ENCODE measurements at regions of chr1 and their contacts with region 1.

Region 1: GRCh38 chr1:27192039-27192529 is 37.2 kb upstream of the SLC9A1 start:
- H3K4me3 Mint-ChIP-seq: no peak overlapping the region
- H3K27ac Mint-ChIP-seq: peak overlapping the region; percentile 62
- H3K4me1 Mint-ChIP-seq: peaks cover 26% of the 10 kb centered on the region
- H3K27me3 Mint-ChIP-seq: peaks cover 6% of the 10 kb centered on the region

Region 2: DNA sequence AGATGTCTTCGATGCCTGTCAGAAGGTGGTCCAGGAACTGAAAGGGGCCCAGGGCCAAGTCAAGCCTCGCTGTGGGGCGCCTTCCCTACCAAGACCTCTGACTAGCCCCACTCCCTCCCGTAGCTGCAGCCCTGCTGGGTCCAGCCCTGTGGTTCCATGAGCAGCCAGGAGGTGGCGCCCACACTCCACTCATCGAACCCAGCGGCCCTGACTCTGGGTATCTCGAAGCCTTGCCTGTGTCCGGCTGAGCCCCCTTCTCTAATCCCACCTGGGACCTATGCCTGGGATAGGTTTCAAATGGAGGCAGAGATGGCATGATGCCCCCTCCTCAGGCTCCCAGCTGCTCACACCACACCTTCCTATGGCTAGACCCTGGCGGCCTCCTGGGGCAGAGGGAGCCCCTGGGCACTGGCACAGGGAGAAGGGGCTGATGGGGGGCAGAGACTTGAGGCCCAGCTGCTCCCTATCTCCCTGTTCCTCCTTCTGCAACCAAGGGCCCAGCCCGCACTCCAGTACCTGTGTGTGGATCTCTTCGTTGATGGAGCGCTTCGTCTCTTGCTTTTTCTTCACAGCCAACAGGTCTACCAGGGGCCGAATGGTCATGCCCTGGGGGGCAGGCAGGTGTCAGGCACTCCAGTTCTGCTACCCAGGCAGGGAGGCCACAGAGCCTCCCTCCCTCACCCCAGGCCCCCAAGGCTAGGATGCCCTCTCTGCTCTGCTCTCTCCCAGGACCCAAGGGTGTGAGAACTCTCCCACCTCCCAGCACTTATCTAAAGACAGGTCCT is 89.2 kb before region 1 on chr1:
- intact Hi-C with region 1: loop called (anchors 5 kb)
- H3K4me3 Mint-ChIP-seq: no peak overlapping the region
- H3K27ac Mint-ChIP-seq: no peak overlapping the region
- H3K4me1 Mint-ChIP-seq: peaks cover 64% of the 10 kb centered on the region
- H3K27me3 Mint-ChIP-seq: no peaks in the 10 kb centered on the region

Measured in dendritic cell treated with granulocyte-macrophage colony-stimulating factor and Interleukin-4, amounts not matched to agents 40 ng/mL and 50 ng/mL, for 4 days (primary cell).